Activated CD4-positive, alpha-beta memory T cell treated with anti-CD3 and anti-CD28 coated beads for 36 hours (primary cell): ENCODE measurements at regions of chr10 and their contacts with region 1.

Region 1: DNA sequence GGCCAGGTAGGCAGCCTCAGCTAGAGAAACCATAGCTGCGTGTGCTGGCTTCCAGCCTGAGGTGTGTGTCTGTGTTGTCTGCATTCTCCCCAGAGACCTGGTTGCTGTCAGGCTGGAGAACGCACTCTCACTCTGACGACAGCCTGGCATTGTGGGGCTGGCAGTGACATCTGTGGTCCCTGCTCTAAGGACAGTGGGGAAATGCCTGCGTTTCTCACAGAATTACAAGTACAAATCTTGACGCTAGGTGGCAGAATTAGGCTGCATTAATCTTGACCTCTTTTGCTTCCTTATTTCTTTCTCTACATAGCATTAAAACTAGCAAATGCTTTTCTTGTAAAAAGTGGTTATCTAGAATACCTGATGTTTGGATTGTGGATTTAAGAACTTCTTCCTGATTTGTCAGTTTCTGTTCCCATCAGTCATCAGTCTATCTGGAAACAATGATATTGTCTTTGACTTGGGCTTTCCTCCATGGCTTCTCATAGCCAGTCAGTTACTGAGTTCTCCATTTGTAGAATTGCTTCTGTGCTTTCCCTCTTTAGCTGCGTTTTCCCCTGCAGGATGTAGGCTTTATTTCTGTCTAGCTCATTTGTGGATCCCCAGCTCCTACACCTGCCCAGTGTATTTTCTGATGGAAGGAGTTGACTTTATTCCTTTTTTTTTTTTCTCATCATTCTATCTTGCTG is 86.0 kb downstream of the FANK1 start:
- DNase-seq: no peak
- H3K4me3 Mint-ChIP-seq: no peak overlapping the region
- H3K27ac Mint-ChIP-seq: no peak overlapping the region
- H3K4me1 Mint-ChIP-seq: no peaks in the 10 kb centered on the region
- H3K27me3 Mint-ChIP-seq: peaks cover 4% of the 10 kb centered on the region

Region 2: DNA sequence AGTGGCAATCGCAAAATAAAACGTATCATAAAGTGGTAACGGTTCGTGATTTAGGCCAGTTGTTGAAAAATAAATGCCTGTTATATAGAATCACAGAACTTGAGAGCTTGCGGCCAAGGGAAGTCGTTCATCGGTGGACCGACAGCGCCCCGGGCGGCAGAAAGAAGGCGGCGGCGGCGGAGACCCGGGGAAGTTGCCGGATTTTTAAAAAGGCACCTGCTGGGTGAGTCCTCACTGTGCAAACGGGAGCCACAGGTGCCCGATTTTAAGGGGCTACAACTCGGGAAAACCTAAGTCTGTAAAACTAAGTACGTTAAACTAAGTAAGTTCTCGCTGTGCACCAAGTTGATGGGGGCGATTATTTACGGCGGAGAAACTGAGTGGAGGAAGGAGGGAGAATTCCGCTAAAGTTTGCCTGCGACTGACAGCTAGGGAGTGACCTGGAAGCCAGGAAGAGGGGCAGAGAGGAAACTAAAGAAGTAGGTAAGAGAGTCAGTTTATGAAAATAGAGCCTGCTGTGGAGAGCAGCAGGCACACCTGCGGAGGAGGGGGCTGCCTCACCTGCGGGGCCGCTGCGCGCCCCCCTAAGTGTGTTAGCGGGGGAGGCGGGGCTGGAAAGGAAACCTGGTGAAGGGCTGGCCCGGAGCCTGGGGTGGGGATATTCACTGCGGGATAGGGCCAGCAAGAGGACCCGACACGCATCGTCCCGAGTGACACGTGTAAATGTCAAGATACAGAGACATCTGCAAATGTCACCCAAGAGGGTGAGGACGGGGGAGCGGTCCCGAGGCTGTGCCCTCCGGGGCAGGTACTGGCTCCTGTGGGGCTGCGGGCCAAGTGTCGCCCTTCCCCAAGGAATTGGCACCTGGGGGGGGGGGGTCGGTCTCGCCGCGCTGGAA is 404.9 kb after region 1 on chr10:
- CTCF ChIA-PET with region 1: no interaction called
- POLR2A ChIA-PET with region 1: no interaction called
- intact Hi-C with region 1: loop called (anchors 2 kb)
- DNase-seq: peak; percentile 49
- H3K4me3 Mint-ChIP-seq: peak overlapping the region; percentile 32
- H3K27ac Mint-ChIP-seq: peak overlapping the region; percentile 34
- H3K4me1 Mint-ChIP-seq: peaks cover 5% of the 10 kb centered on the region
- H3K27me3 Mint-ChIP-seq: peaks cover 29% of the 10 kb centered on the region

Region 3: DNA sequence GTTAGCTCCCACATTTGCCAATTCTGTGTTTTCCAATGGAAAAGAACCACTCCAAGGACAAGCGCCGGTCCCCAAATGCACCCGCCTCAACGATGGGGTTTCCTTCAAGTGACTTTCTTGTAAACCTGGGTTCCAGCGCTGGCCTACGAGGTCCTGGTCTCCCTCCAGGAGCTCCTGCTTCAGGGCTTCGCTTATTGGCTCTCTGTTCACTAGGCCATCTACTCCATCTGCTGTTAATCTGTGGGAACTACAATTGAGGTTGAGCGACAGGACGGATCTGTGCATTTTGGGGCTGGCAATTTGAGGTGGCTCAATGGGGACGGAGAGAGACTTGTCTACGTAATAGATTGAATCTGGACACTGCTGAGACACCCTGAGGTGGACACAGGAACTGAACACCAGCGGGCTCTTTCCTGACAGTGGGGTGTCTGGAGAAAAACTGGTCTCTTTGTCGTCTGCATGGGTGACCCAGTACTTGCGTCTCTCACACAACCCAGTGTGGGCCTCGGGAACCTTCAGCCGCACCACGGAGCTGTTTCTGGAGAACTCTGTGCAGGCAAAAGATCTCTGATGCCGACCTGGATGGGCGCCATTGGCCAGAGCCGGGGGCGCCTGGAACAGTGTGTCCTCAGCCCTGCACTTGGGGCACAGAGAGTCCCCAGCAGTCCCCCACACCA is 521.8 kb after region 1 on chr10:
- CTCF ChIA-PET with region 1: interaction called, 10 read pairs
- POLR2A ChIA-PET with region 1: no interaction called
- intact Hi-C with region 1: no loop called
- DNase-seq: no peak
- H3K4me3 Mint-ChIP-seq: peak overlapping the region; percentile 3
- H3K27ac Mint-ChIP-seq: no peak overlapping the region
- H3K4me1 Mint-ChIP-seq: no peaks in the 10 kb centered on the region
- H3K27me3 Mint-ChIP-seq: peaks cover 2% of the 10 kb centered on the region

Region 4: GRCh38 chr10:126749015-126749655 is 766.7 kb after region 1 on chr10:
- CTCF ChIA-PET with region 1: interaction called, 3 read pairs
- POLR2A ChIA-PET with region 1: no interaction called
- intact Hi-C with region 1: loop called (anchors 5 kb)
- DNase-seq: peak; percentile 61
- H3K4me3 Mint-ChIP-seq: no peak overlapping the region
- H3K27ac Mint-ChIP-seq: no peak overlapping the region
- H3K4me1 Mint-ChIP-seq: no peaks in the 10 kb centered on the region
- H3K27me3 Mint-ChIP-seq: no peaks in the 10 kb centered on the region

Region 5: DNA sequence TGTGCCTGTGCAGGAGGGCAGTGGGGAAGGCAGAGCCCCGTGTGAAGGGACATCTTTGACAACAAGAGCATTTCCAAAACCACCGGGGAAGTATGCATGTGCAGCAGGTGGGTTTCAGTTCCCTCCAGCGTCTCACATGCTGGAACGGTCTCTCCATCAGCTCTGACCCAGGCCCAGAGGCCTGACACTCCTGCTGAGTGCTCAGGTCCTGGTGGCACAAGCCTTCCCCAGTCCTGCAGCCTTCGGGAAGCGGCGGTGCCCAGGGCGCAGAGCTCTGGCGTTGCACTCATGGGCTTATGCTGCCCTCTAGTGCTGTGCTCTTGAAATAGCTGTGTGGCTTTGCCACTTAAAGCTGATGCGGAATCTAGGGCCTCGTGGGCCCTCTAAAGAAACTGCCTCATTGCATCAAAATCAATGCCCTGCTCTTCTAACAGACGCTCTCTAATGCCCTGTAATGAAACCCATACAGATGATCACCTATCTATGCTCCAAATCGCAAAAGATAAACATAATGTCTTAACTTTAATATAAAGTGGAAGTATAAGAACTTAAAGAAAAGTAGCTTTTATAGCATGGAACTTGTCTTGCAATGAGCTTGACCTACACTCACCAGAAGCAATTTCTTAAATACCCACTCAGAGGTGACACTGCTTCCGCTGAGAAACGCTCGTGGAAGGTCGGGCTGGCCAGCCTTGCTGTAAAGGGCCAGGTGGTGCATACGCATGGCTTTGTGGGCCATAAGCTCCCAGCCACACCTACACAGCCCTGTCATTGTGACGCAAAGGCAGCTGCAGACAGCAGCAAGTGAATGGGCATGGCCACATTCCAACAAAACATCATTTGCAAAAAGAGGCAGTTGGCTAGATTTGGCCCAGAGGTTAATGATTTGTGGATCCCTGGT is 1871.7 kb after region 1 on chr10:
- CTCF ChIA-PET with region 1: no interaction called
- POLR2A ChIA-PET with region 1: no interaction called
- intact Hi-C with region 1: loop called (anchors 5 kb)
- DNase-seq: peak; percentile 47
- H3K4me3 Mint-ChIP-seq: no peak overlapping the region
- H3K27ac Mint-ChIP-seq: no peak overlapping the region
- H3K4me1 Mint-ChIP-seq: no peaks in the 10 kb centered on the region
- H3K27me3 Mint-ChIP-seq: peaks cover 2% of the 10 kb centered on the region